Endothelial cell of umbilical vein (primary cell): ENCODE measurements at regions of chr5 and their contacts with region 1.

Region 1: GRCh38 chr5:177370488-177371119 is 12.9 kb downstream of the RGS14 start:
- DNase-seq: peak; percentile 90
- H3K4me3 ChIP-seq: peak overlapping the region in 1 of 3 experiments; percentile 29
- H3K27ac ChIP-seq: no peak overlapping the region
- H3K4me1 ChIP-seq: peaks cover 28% of the 10 kb centered on the region
- H3K27me3 ChIP-seq: no peaks in the 10 kb centered on the region
- CTCF ChIP-seq: peak; percentile 52 to 81
- POLR2A ChIP-seq: no peak

Region 2: GRCh38 chr5:177311723-177312648 is 58.6 kb before region 1 on chr5 and contains the start of gene MXD3:
- CTCF ChIA-PET with region 1: interaction called, 19 read pairs
- POLR2A ChIA-PET with region 1: interaction called, 3 read pairs
- dilution Hi-C with region 1: no loop called
- intact Hi-C with region 1: loop called (anchors 5 kb)
- DNase-seq: peak; percentile 92
- H3K4me3 ChIP-seq: peak within 1 kb of the TSS; percentile 49 to 64 (median 58)
- H3K27ac ChIP-seq: peak within 1 kb of the TSS; percentile 78
- H3K4me1 ChIP-seq: peaks cover 22% of the 10 kb centered on the region
- H3K27me3 ChIP-seq: no peaks in the 10 kb centered on the region
- CTCF ChIP-seq: no peak
- POLR2A ChIP-seq: peak; percentile 63
- total RNA-seq, gene MXD3: 30.5 and 44.2 TPM in 2 replicates

Region 3: DNA sequence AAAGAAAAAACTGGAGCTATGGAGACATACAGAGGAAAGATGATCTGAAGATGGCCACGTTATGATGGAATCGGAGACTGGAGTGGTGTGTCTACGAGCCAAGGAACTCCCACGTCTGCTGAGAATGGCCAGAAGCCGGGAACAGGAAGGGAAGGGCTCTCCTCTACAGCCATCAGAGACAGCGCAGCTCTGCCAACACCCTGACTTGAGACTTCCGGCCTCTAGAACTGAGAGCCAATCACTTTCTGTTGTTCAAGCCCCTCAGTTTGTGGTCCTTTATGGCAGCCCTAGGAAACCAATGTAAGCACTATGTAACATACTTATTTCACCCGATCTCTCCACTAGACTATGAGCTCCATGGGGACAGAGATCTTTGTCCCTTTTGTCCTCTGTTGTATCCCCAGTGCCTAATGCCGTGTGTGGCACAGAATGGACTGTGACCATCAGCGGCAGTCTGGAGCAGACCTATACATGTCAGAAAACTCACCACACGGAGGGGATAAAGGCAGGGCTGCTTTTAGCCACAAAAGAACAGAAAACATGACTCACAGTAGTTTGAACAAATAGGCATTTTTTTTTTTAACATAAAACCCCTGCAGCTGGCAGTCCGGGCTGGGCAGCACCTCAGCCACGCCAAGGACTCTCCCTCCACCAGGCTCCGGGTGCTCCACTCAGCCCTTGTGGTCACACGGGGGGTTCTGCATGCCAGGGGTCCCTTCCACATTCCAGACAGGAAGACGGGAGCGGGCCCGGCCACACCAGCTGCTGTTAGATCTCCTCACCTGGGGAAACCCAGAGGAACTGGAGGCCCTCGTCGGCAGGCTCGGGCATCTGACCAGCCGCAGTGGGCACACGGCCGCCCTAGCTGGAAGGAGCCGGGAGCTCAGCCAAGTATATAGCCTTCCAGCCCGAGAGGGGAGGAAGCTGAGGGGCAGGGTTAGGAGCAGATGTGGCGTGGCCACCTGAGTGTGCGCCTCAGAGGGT is 42.8 kb before region 1 on chr5:
- CTCF ChIA-PET with region 1: interaction called, 15 read pairs
- POLR2A ChIA-PET with region 1: no interaction called
- dilution Hi-C with region 1: no loop called
- intact Hi-C with region 1: loop called (anchors 1 kb)
- DNase-seq: peak; percentile 79
- H3K4me3 ChIP-seq: peak overlapping the region in 1 of 3 experiments; percentile 36
- H3K27ac ChIP-seq: peak overlapping the region; percentile 77
- H3K4me1 ChIP-seq: peaks cover 22% of the 10 kb centered on the region
- H3K27me3 ChIP-seq: no peaks in the 10 kb centered on the region
- CTCF ChIP-seq: no peak
- POLR2A ChIP-seq: peak; percentile 50

Region 4: DNA sequence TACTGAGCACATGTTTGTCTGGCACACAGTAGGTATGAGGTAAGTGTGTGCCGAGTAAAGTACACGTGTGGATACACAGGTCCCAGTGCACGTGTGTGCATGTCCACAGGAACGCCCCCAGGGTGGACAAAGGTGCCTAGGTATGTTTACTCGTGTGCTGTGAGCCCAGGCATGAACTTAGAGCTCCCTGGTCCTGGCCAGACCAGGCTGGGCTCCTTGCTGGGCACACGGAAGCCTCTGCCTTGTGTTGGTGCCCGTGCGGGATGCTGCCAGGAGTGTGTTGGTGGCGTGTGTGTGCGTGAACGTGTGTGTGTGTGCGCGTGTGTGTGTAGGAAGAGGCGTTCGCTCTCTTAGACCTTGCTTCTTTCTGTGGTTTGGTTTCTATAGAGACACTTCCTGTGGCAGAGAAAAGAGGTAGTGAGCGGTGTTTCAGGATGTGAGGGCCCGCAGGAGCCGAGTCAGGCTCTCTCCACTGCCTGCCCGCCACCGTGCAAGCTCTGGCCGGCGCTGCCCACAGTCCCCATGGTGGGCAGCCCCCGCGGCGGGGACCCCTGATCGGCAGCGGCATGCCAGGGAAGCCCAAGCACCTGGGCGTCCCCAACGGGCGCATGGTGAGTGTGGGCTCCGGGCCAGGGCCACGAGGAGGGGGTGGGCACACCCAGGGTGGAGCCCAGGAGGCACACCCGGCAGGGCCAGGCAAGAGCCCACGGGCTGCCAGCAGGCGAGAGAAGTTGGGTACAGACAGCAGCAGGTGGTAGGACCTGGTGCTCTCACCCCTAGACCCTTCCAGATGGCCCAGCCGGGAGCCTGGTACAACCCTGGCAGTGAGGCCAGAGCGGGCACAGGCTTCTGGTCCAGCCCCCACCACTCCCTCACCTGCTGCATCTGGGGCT is 12.9 kb before region 1 on chr5 and contains the start of gene RGS14:
- CTCF ChIA-PET with region 1: interaction called, 31 read pairs
- POLR2A ChIA-PET with region 1: interaction called, 3 read pairs
- dilution Hi-C with region 1: no loop called
- intact Hi-C with region 1: loop called (anchors 1 kb)
- DNase-seq: peak; percentile 56
- H3K4me3 ChIP-seq: peak within 1 kb of the TSS in 1 of 3 experiments; percentile 16
- H3K27ac ChIP-seq: no peak within 1 kb of the TSS
- H3K4me1 ChIP-seq: peaks cover 15% of the 10 kb centered on the region
- H3K27me3 ChIP-seq: no peaks in the 10 kb centered on the region
- CTCF ChIP-seq: no peak
- POLR2A ChIP-seq: no peak
- total RNA-seq, gene RGS14: 4.3 and 4.8 TPM in 2 replicates

Region 5: GRCh38 chr5:177390363-177391300 is 20.0 kb after region 1 on chr5:
- CTCF ChIA-PET with region 1: interaction called, 64 read pairs
- POLR2A ChIA-PET with region 1: interaction called, 3 read pairs
- dilution Hi-C with region 1: no loop called
- intact Hi-C with region 1: no loop called
- DNase-seq: peak; percentile 88
- H3K4me3 ChIP-seq: no peak overlapping the region
- H3K27ac ChIP-seq: no peak overlapping the region
- H3K4me1 ChIP-seq: no peaks in the 10 kb centered on the region
- H3K27me3 ChIP-seq: no peaks in the 10 kb centered on the region
- CTCF ChIP-seq: peak; percentile 90 to 92
- POLR2A ChIP-seq: no peak

Region 6: DNA sequence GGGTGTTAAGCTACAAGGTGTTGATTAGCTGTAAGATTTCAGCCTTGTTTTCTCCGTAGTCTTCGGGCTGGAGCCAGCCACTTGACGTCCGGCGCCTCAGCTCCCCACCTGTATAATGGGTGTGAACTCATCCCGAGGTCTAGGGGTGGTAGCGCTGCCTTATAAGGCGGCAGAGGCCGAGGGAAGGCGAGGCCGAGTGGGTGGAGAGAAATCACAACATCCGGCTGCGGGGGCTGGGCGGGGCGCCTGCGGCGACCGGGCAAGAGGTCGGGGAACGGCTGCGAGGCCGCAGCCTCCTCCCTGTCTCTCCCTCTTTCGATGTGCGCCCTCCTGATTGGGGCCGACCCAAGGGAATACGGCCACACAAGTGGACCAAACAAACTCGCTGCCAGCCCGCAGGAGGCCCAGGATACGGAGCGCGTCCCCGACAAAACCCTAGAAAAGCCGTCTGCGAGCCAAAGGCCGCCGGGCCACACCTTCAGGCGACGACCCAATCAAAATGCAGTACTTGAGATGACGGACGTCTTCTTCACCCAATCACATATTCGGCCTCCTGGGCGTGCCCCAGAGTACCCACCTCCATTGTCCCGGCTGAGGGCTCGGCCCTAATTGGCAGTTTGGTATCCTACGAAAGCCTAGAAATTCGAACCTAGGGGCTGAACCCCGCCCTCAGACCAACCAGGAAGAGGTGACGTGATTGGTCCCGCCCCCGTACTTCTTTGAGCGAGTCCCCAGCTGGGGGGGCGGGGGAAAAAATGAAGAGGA is 55.4 kb after region 1 on chr5:
- CTCF ChIA-PET with region 1: interaction called, 3 read pairs
- POLR2A ChIA-PET with region 1: interaction called, 4 read pairs
- dilution Hi-C with region 1: no loop called
- intact Hi-C with region 1: loop called (anchors 2 kb)
- DNase-seq: peak; percentile 100
- H3K4me3 ChIP-seq: peak overlapping the region; percentile 40 to 52 (median 51)
- H3K27ac ChIP-seq: peak overlapping the region; percentile 61
- H3K4me1 ChIP-seq: peaks cover 14% of the 10 kb centered on the region
- H3K27me3 ChIP-seq: no peaks in the 10 kb centered on the region
- CTCF ChIP-seq: no peak
- POLR2A ChIP-seq: peak; percentile 56